OCI-LY7 (cell line): ENCODE measurements at regions of chr5 and their contacts with region 1.

Region 1: DNA sequence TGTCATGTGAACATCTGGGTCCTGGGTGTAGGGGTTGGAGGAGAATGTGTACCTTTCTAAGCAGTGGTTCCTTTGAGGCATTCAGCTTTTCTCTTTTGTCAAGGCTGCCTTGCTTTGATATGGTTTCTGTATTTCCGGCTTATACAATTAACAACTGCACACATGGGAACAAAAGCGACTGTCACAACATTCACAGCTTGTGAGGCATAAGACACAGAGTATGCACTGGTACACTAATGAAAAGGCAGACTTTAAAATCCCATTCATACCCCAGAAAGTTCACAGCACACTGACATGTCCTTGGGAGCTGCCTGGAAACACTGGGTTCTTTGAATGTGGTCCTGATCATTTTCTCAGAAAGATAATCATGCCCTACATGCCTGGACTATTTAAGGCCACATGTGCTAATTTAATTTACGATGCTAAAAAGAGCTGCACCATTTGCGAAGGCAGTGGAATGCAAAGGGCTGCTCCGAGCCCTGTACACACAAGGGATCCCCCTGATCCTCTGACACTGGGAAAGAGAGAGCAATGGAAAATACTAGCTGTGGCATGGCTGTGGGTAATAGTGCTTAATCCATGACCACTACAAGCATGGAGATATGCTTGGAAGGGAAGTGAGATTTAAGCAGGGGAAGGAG is 131.8 kb downstream of the EFNA5 start:
- DNase-seq: no peak
- H3K4me3 ChIP-seq: no peak overlapping the region
- H3K27ac ChIP-seq: no peak overlapping the region
- H3K4me1 ChIP-seq: peaks cover 20% of the 10 kb centered on the region
- CTCF ChIP-seq: no peak

Region 2: DNA sequence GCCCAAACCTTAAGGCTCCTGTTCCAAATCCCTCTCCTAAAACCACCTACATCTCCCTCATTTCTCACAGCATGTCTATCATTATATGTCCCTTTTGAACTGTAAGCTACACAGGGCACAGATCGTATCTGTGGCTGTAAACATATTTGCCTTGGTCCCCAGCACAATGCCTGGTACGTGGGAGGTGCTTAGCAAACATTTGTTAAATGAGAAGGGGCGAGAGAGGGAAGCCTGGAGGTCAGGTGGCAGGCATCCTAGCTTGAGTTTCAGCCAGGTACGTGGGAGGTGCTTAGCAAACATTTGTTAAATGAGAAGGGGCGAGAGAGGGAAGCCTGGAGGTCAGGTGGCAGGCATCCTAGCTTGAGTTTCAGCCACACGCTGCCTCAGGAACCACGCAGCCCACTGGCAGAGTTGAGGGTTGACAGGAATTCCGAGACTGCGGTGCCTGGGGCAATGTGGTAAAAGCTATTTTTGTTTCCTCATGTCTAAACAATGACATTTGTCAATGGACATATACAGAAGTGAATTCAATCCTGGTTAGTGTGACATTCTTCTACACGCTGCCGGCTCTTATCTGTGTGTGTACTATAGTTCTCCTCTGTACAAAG is 18.2 kb after region 1 on chr5:
- CTCF ChIA-PET with region 1: interaction called, 3 read pairs
- POLR2A ChIA-PET with region 1: interaction called, 13 read pairs
- intact Hi-C with region 1: no loop called
- DNase-seq: no peak
- H3K4me3 ChIP-seq: no peak overlapping the region
- H3K27ac ChIP-seq: no peak overlapping the region
- H3K4me1 ChIP-seq: peaks cover 46% of the 10 kb centered on the region
- CTCF ChIP-seq: no peak